B cell (primary cell): ENCODE measurements at regions of chr6 and their contacts with region 1.

Region 1: GRCh38 chr6:81752138-81752920 is at the start of gene TENT5A:
- DNase-seq: peak; percentile 91
- ATAC-seq: peak; percentile 69
- H3K4me3 ChIP-seq: peak within 1 kb of the TSS; percentile 79 to 94 (median 83)
- H3K4me3 Mint-ChIP-seq: peak within 1 kb of the TSS; percentile 93
- H3K27ac ChIP-seq: peak within 1 kb of the TSS; percentile 71 to 81
- H3K27ac Mint-ChIP-seq: peak within 1 kb of the TSS; percentile 98
- H3K4me1 ChIP-seq: peaks cover 25 to 33% of the 10 kb centered on the region in 2 donors
- H3K4me1 Mint-ChIP-seq: peaks cover 38% of the 10 kb centered on the region
- H3K27me3 ChIP-seq: no peaks in the 10 kb centered on the region
- H3K27me3 Mint-ChIP-seq: peaks cover 4% of the 10 kb centered on the region
- CTCF ChIP-seq: peak; percentile 33
- total RNA-seq, gene TENT5A: 9.4 and 11.1 TPM in 2 replicates

Region 2: GRCh38 chr6:79777713-79778579 is 1974.4 kb before region 1 on chr6:
- CTCF ChIA-PET with region 1: no interaction called
- POLR2A ChIA-PET with region 1: no interaction called
- intact Hi-C with region 1: loop called (anchors 2 kb)
- DNase-seq: peak; percentile 89
- ATAC-seq: peak; percentile 96
- H3K4me3 ChIP-seq: peak overlapping the region; percentile 11 to 78 (median 55)
- H3K4me3 Mint-ChIP-seq: peak overlapping the region; percentile 81
- H3K27ac ChIP-seq: peak overlapping the region in 1 of 2 donors; percentile 76
- H3K27ac Mint-ChIP-seq: peak overlapping the region; percentile 56
- H3K4me1 ChIP-seq: peaks cover 7 to 11% of the 10 kb centered on the region in 2 donors
- H3K4me1 Mint-ChIP-seq: peaks cover 9% of the 10 kb centered on the region
- H3K27me3 ChIP-seq: no peaks in the 10 kb centered on the region
- H3K27me3 Mint-ChIP-seq: no peaks in the 10 kb centered on the region
- CTCF ChIP-seq: peak; percentile 91

Region 3: GRCh38 chr6:80004173-80005072 is 1747.9 kb before region 1 on chr6 and contains the start of gene TTK:
- CTCF ChIA-PET with region 1: no interaction called
- POLR2A ChIA-PET with region 1: no interaction called
- intact Hi-C with region 1: loop called (anchors 1 kb)
- DNase-seq: peak; percentile 94
- ATAC-seq: peak; percentile 100
- H3K4me3 ChIP-seq: peak within 1 kb of the TSS; percentile 26 to 93 (median 84)
- H3K4me3 Mint-ChIP-seq: peak within 1 kb of the TSS; percentile 92
- H3K27ac ChIP-seq: peak within 1 kb of the TSS; percentile 39 to 57
- H3K27ac Mint-ChIP-seq: peak within 1 kb of the TSS; percentile 70
- H3K4me1 ChIP-seq: peaks cover 12 to 13% of the 10 kb centered on the region in 2 donors
- H3K4me1 Mint-ChIP-seq: peaks cover 21% of the 10 kb centered on the region
- H3K27me3 ChIP-seq: no peaks in the 10 kb centered on the region
- H3K27me3 Mint-ChIP-seq: no peaks in the 10 kb centered on the region
- CTCF ChIP-seq: no peak
- total RNA-seq, gene TTK: 0.68 and 0.84 TPM in 2 replicates

Region 4: DNA sequence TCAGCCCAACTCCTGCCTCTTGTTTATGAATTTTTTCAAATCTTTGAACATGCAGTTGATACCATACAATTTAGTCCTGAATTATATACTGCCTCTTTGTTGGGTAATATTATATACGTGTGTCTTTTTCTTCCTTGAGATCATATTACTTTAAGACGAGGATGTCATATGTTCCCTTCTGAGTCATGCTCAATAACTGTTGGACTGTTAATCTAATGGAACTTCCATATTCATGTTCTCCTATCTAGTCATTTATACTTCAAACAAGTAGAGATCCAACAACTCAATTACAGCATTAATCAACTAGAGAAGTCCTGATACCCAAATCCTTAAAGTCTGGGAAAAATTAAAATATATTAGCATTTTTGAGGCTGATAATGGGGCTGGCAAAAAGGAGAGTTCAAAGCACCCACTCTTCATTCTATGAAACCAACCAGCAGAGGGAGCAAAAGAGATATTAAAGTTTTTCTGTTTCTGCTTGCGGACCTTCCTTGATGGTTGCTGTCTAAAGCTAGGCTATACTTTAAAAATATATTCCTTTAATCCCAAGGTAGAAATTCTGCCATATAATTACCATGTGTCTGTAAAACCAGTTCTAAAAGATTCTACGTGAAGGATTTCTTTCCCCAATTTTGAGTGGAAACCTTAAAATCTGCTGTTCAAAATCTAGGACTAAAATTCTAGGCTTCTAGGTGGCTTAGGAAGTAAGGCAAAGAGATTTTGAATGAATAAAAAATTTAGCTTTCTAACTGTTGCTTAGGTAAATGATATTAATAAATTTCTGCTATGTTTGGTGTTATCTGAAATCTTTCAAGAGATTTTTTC is 1147.0 kb before region 1 on chr6:
- CTCF ChIA-PET with region 1: interaction called, 4 read pairs
- POLR2A ChIA-PET with region 1: no interaction called
- intact Hi-C with region 1: loop called (anchors 1 kb)
- DNase-seq: peak; percentile 23
- ATAC-seq: no peak
- H3K4me3 ChIP-seq: no peak overlapping the region
- H3K4me3 Mint-ChIP-seq: no peak overlapping the region
- H3K27ac ChIP-seq: no peak overlapping the region
- H3K27ac Mint-ChIP-seq: no peak overlapping the region
- H3K4me1 ChIP-seq: no peaks in the 10 kb centered on the region
- H3K4me1 Mint-ChIP-seq: no peaks in the 10 kb centered on the region
- H3K27me3 ChIP-seq: no peaks in the 10 kb centered on the region
- H3K27me3 Mint-ChIP-seq: no peaks in the 10 kb centered on the region
- CTCF ChIP-seq: peak; percentile 56

Region 5: GRCh38 chr6:81808851-81809570 is 56.7 kb after region 1 on chr6:
- CTCF ChIA-PET with region 1: no interaction called
- POLR2A ChIA-PET with region 1: no interaction called
- intact Hi-C with region 1: loop called (anchors 5 kb)
- DNase-seq: peak; percentile 30
- ATAC-seq: peak; percentile 54
- H3K4me3 ChIP-seq: peak overlapping the region; percentile 13 to 45 (median 39)
- H3K4me3 Mint-ChIP-seq: peak overlapping the region; percentile 82
- H3K27ac ChIP-seq: peak overlapping the region; percentile 67 to 82
- H3K27ac Mint-ChIP-seq: peak overlapping the region; percentile 85
- H3K4me1 ChIP-seq: peaks cover 23 to 35% of the 10 kb centered on the region in 2 donors
- H3K4me1 Mint-ChIP-seq: peaks cover 34% of the 10 kb centered on the region
- H3K27me3 ChIP-seq: no peaks in the 10 kb centered on the region
- H3K27me3 Mint-ChIP-seq: peaks cover 3% of the 10 kb centered on the region
- CTCF ChIP-seq: no peak

Region 6: GRCh38 chr6:82247634-82248232 is 495.4 kb after region 1 on chr6 and contains the start of gene IBTK:
- CTCF ChIA-PET with region 1: interaction called, 3 read pairs
- POLR2A ChIA-PET with region 1: no interaction called
- intact Hi-C with region 1: loop called (anchors 1 kb)
- DNase-seq: peak; percentile 92
- ATAC-seq: peak; percentile 88
- H3K4me3 ChIP-seq: peak within 1 kb of the TSS; percentile 59 to 96 (median 88)
- H3K4me3 Mint-ChIP-seq: peak within 1 kb of the TSS; percentile 99
- H3K27ac ChIP-seq: peak within 1 kb of the TSS; percentile 82 to 83
- H3K27ac Mint-ChIP-seq: peak within 1 kb of the TSS; percentile 95
- H3K4me1 ChIP-seq: peaks cover 15 to 20% of the 10 kb centered on the region in 2 donors
- H3K4me1 Mint-ChIP-seq: peaks cover 34% of the 10 kb centered on the region
- H3K27me3 ChIP-seq: no peaks in the 10 kb centered on the region
- H3K27me3 Mint-ChIP-seq: peaks cover under 1% of the 10 kb centered on the region
- CTCF ChIP-seq: no peak
- total RNA-seq, gene IBTK: 27.7 and 28.3 TPM in 2 replicates